GM10248 (cell line): ENCODE measurements at regions of chr6 and their contacts with region 1.

Region 1: GRCh38 chr6:28252009-28252975 is at the start of gene ZKSCAN4:
- DNase-seq: peak; percentile 83
- CTCF ChIP-seq: no peak

Region 2: GRCh38 chr6:28225056-28225834 is 27.0 kb before region 1 on chr6 and contains the start of gene ZSCAN9:
- CTCF ChIA-PET with region 1: no interaction called
- POLR2A ChIA-PET with region 1: no interaction called
- DNase-seq: peak; percentile 80
- CTCF ChIP-seq: no peak

Region 3: DNA sequence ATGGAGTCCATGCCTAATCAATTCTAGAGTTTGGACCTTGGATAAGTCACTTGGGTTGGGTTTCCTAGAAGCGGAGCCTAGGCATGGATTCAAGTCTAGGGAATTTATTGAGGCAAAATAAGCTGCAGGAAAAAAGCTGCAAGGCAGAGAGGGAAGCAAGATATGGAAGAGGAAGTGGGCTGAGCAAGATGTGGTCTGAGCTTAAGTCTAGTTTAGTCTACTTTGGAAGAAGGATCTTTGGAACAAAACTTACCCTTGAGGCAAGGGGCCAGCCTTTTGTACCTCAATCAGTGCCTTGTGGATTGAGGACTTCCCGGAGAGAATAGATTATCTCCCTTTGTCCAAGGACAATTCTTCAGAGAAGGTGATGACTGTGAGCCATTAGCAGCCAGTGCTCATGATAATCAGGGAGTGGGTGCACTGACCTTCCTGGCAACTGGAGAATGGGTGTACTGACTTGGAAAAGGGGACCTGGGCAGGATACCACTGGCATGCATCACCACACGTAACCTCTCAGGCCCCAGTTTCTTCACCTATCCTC is 16.3 kb before region 1 on chr6:
- CTCF ChIA-PET with region 1: no interaction called
- POLR2A ChIA-PET with region 1: no interaction called
- DNase-seq: no peak
- CTCF ChIP-seq: no peak

Region 4: DNA sequence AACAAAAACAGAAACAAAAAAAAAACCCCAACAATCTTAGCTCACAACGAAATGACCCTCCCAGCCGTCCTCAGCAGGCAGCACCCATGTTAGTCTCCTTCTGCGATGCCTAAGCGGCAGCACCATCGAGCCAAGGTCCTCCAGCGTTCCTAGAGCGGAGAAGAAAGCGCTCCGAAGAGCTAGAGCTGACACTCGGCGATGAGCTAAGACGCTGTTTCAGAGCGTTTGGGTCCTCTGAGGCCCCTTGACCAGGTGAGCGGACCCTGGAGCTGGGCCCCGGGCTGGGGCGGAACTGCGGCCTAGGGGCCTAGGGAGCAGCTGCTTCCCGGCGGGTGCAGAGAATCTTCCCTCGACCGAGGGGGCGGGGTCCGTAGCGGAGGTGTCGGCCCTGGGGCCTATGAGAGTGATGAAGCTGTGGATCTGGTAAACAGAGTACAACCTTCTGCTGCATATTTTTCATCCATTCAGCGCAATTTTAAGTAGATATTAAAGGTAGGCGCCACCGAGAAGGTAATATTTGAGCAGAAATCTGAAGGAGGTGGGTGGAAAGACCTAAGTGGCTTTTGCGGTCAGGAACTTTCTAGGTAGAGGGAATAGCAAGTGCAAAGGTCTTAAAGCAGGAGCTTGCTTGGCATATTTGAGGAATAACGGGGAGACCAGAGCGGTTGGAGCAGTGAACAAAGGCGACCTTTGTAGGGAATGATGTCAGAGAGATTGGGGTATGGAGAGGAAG is 14.8 kb after region 1 on chr6 and contains the start of gene ZSCAN26:
- CTCF ChIA-PET with region 1: interaction called, 7 read pairs
- POLR2A ChIA-PET with region 1: interaction called, 12 read pairs
- DNase-seq: peak; percentile 82
- CTCF ChIP-seq: no peak